HepG2 (cell line): ENCODE measurements at regions of chr5 and their contacts with region 1.

Region 1: DNA sequence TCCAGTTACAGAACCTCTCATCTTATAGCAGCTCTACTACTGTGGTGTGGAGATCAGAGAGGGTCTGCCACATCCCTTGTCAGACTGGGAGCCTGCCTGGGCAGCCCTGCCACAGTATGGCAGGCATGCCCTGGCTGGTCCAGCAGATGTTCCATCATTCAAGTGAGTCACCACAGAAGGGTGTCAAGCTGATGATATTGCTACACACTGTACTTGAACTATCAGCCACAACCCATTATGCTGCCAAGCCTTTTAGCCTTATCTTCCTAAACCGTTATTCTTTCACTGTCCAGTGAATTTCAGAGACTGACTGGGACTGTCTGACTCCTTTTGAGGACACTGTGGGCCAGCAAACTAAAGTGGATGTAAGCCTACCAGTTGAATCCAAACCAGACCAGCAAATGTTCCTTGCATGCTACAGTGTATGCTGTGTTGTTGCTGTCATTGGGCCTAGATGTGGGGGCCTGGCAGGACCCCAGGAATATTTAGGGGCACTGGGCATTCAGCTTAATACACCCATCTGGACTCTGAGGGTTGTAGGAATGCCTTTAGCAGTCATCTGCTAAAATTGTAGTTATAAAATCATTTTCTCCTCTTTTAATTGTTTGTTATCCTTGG is 202.6 kb downstream of the NR3C1 start:
- DNase-seq: no peak
- ATAC-seq: peak; percentile 57
- H3K4me3 ChIP-seq: no peak overlapping the region
- H3K27ac ChIP-seq: peak overlapping the region; percentile 60
- H3K4me1 ChIP-seq: peaks cover 58% of the 10 kb centered on the region
- H3K27me3 ChIP-seq: no peaks in the 10 kb centered on the region
- CTCF ChIP-seq: no peak
- EP300 ChIP-seq: no peak
- POLR2A ChIP-seq: no peak
- RAD21 ChIP-seq: no peak

Region 2: GRCh38 chr5:141734501-141735230 is 1466.2 kb before region 1 on chr5:
- CTCF ChIA-PET with region 1: no interaction called
- POLR2A ChIA-PET with region 1: no interaction called
- in situ Hi-C with region 1: no loop called
- intact Hi-C with region 1: no loop called
- DNase-seq: no peak
- ATAC-seq: peak; percentile 60
- H3K4me3 ChIP-seq: no peak overlapping the region
- H3K27ac ChIP-seq: no peak overlapping the region
- H3K4me1 ChIP-seq: no peaks in the 10 kb centered on the region
- H3K27me3 ChIP-seq: no peaks in the 10 kb centered on the region; a peak in 1 of 5 replicates
- CTCF ChIP-seq: no peak
- EP300 ChIP-seq: no peak
- POLR2A ChIP-seq: no peak
- RAD21 ChIP-seq: no peak

Region 3: DNA sequence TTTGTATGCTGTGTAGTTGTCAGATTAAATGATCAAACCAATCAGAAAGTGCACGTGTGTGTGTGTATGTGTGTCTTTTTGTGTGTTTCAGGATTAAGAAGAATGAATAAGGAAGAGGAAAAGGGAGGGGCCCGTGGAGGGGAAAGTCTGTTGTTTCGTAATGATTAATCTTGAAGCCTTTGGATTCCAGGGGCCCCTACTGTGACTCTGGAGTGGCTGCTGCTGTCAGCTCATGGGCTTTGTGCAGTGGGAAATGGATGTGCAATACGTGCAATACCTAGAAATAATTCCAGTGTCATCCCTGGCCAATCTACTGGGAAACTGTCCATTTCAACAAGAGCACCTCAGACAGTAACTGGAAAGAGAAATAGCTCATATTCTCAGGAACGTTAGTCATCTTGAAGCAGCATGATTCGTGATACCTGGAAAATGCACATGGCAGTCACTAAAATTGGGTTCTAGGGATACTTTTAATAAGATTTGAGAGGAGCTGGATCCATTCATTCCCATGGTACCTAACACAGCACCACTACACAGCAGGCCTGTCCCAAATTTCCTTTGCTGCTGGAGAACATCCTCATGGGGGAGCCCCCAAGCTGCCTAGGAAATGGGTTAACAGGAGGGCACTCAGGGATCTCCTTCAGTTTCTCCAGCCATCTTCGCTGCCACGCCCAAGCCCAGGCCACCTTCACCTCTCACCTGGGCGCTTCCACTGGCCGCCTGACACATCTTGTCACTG is 16.3 kb after region 1 on chr5:
- CTCF ChIA-PET with region 1: no interaction called
- POLR2A ChIA-PET with region 1: no interaction called
- in situ Hi-C with region 1: no loop called
- intact Hi-C with region 1: no loop called
- DNase-seq: peak; percentile 32
- ATAC-seq: peak; percentile 63
- H3K4me3 ChIP-seq: no peak overlapping the region
- H3K27ac ChIP-seq: no peak overlapping the region
- H3K4me1 ChIP-seq: peaks cover 26% of the 10 kb centered on the region
- H3K27me3 ChIP-seq: no peaks in the 10 kb centered on the region
- CTCF ChIP-seq: no peak
- EP300 ChIP-seq: no peak
- POLR2A ChIP-seq: no peak
- RAD21 ChIP-seq: no peak

Region 4: GRCh38 chr5:143229896-143230675 is 29.2 kb after region 1 on chr5:
- CTCF ChIA-PET with region 1: no interaction called
- POLR2A ChIA-PET with region 1: no interaction called
- in situ Hi-C with region 1: no loop called
- intact Hi-C with region 1: no loop called
- DNase-seq: peak; percentile 37
- ATAC-seq: peak; percentile 46; the same call in 2 of the 3 replicates
- H3K4me3 ChIP-seq: no peak overlapping the region
- H3K27ac ChIP-seq: peak overlapping the region; percentile 42
- H3K4me1 ChIP-seq: peaks cover 64% of the 10 kb centered on the region
- H3K27me3 ChIP-seq: no peaks in the 10 kb centered on the region
- CTCF ChIP-seq: no peak
- EP300 ChIP-seq: peak in 1 of 2 experiments; percentile 36; a peak in 2 of 4 replicates
- POLR2A ChIP-seq: no peak
- RAD21 ChIP-seq: no peak

Region 5: GRCh38 chr5:143398451-143399237 is 197.8 kb after region 1 on chr5:
- CTCF ChIA-PET with region 1: no interaction called
- POLR2A ChIA-PET with region 1: no interaction called
- in situ Hi-C with region 1: no loop called
- intact Hi-C with region 1: loop called (anchors 2 kb)
- DNase-seq: peak; percentile 31
- ATAC-seq: no peak
- H3K4me3 ChIP-seq: peak overlapping the region; percentile 51 to 96 (median 95); a peak in 5 of 6 replicates
- H3K27ac ChIP-seq: peak overlapping the region; percentile 3
- H3K4me1 ChIP-seq: peaks cover 82% of the 10 kb centered on the region
- H3K27me3 ChIP-seq: no peaks in the 10 kb centered on the region; a peak in 1 of 5 replicates
- CTCF ChIP-seq: no peak
- EP300 ChIP-seq: no peak
- POLR2A ChIP-seq: no peak
- RAD21 ChIP-seq: no peak